ENCODE measurements at regions of chr6 and their contacts with region 1.

Region 1: DNA sequence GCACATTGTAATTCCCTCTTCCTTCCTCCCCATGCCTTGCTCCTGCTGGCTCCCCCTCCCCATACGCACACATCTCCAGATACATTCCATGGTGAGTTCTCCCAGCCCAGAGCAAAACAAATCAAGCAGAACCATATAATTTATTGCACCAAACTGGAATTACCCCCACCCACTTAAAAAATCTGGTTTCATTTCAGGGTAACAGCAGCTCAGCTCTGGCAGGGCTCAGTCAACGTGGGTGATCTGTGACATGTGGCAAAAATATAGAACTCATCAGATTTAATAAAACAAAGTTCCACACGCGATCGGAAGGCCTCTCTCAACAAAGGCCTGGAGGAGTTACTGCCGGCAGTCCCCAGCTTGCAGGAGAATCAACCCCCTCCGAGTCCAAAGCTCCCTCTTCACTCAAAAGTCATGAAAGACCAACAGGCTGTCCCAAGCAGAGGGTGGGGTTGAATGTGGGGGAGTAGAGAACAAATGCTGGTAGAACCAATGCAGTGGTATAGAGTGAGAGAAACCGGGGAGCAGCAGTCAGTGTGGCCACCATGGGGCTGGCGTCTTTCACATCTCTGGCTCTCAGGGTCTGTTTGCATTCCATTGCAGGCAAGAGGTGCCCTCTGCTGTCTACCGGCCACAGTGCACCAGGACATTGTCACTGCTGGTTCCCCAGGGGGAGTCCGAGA is 323.3 kb upstream of the NT5E start:
- DNase-seq: peak; percentile 47
- ATAC-seq: peak; percentile 100
- H3K4me3 ChIP-seq: no peak overlapping the region
- H3K27ac ChIP-seq: no peak overlapping the region
- H3K4me1 ChIP-seq: no peaks in the 10 kb centered on the region
- H3K27me3 ChIP-seq: 0 out of 2 replicates have a peak, but pooled peaks cover 9% of the 10 kb centered on the region
- CTCF ChIP-seq: peak; percentile 63 to 83 (median 79); a peak in 5 of 6 replicates
- POLR2A ChIP-seq: no peak
- RAD21 ChIP-seq: peak; percentile 81

Region 2: GRCh38 chr6:84243240-84243639 is 883.4 kb before region 1 on chr6:
- CTCF ChIA-PET with region 1: no interaction called
- POLR2A ChIA-PET with region 1: no interaction called
- RAD21 ChIA-PET with region 1: no interaction called
- intact Hi-C with region 1: loop called (anchors 5 kb)
- DNase-seq: no peak
- ATAC-seq: no peak
- H3K4me3 ChIP-seq: no peak overlapping the region
- H3K27ac ChIP-seq: no peak overlapping the region
- H3K4me1 ChIP-seq: no peaks in the 10 kb centered on the region
- H3K27me3 ChIP-seq: no peaks in the 10 kb centered on the region
- CTCF ChIP-seq: peak in 1 of 3 experiments; percentile 22; a peak in 1 of 6 replicates
- POLR2A ChIP-seq: no peak
- RAD21 ChIP-seq: peak; percentile 38

Region 3: GRCh38 chr6:84422380-84422968 is 704.2 kb before region 1 on chr6:
- CTCF ChIA-PET with region 1: interaction called, 12 read pairs
- POLR2A ChIA-PET with region 1: no interaction called
- RAD21 ChIA-PET with region 1: no interaction called
- intact Hi-C with region 1: loop called (anchors 5 kb)
- DNase-seq: peak; percentile 31
- ATAC-seq: peak; percentile 99
- H3K4me3 ChIP-seq: peak overlapping the region in 1 of 2 experiments; percentile 20; a peak in 1 of 4 replicates
- H3K27ac ChIP-seq: no peak overlapping the region
- H3K4me1 ChIP-seq: 0 out of 4 replicates have a peak, but pooled peaks cover 0 to 3% of the 10 kb centered on the region in 2 experiments
- H3K27me3 ChIP-seq: 0 out of 2 replicates have a peak, but pooled peaks cover 8% of the 10 kb centered on the region
- CTCF ChIP-seq: peak; percentile 79 to 97 (median 93)
- POLR2A ChIP-seq: no peak
- RAD21 ChIP-seq: peak; percentile 84

Region 4: DNA sequence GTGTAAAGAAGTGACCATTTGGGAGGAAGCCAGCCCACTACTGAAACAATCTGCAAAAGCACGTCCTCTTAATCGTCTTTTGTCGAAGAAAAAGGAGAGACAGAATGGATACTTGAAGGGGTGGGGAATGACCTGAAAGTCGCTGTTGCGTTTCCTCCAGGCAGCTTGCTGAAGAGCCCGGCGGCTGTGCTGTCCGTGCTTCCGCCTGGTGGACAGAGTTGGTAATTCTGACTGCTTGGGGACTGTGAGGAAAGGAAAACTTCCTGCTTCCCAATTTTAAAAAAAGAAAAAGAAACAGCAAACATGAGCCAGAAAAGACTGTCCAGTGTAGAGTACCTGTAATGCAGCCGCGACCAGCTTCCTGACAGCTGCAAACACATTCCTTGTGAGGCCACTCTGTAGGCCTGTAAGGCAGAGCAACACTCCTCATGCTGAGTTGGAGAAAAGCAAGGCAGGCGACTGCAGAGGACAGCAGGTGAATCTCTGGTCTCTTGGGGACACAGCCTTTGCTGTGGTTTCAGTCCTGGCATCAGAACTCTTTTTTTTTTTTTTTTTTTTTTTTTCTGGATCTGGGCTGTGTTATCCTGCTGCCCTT is 111.1 kb before region 1 on chr6:
- CTCF ChIA-PET with region 1: no interaction called
- POLR2A ChIA-PET with region 1: no interaction called
- RAD21 ChIA-PET with region 1: no interaction called
- intact Hi-C with region 1: loop called (anchors 10 kb)
- DNase-seq: peak; percentile 63
- ATAC-seq: peak; percentile 99
- H3K4me3 ChIP-seq: no peak overlapping the region
- H3K27ac ChIP-seq: no peak overlapping the region
- H3K4me1 ChIP-seq: peaks cover 0 to 5% of the 10 kb centered on the region in 2 experiments; a peak in 1 of 4 replicates
- H3K27me3 ChIP-seq: peaks cover 3% of the 10 kb centered on the region; the same call in 1 of the 2 replicates
- CTCF ChIP-seq: peak; percentile 74 to 86 (median 80)
- POLR2A ChIP-seq: no peak
- RAD21 ChIP-seq: peak; percentile 67

Region 5: GRCh38 chr6:85137865-85138264 is 11.2 kb after region 1 on chr6:
- CTCF ChIA-PET with region 1: no interaction called
- POLR2A ChIA-PET with region 1: no interaction called
- RAD21 ChIA-PET with region 1: no interaction called
- intact Hi-C with region 1: no loop called
- DNase-seq: no peak
- ATAC-seq: no peak
- H3K4me3 ChIP-seq: no peak overlapping the region
- H3K27ac ChIP-seq: no peak overlapping the region
- H3K4me1 ChIP-seq: no peaks in the 10 kb centered on the region
- H3K27me3 ChIP-seq: peaks cover 27% of the 10 kb centered on the region
- CTCF ChIP-seq: no peak
- POLR2A ChIP-seq: no peak
- RAD21 ChIP-seq: no peak